ENCODE measurements at regions of chr7 and their contacts with region 1.

Region 1: GRCh38 chr7:116173051-116174028 is 37.0 kb upstream of the TES start:
- DNase-seq: peak; percentile 84
- H3K4me3 ChIP-seq: no peak overlapping the region
- H3K27ac ChIP-seq: no peak overlapping the region
- H3K4me1 ChIP-seq: no peaks in the 10 kb centered on the region
- H3K27me3 ChIP-seq: peaks cover 0 to 3% of the 10 kb centered on the region in 2 experiments
- CTCF ChIP-seq: peak in 1 of 2 donors; percentile 20
- POLR2A ChIP-seq: no peak

Region 2: DNA sequence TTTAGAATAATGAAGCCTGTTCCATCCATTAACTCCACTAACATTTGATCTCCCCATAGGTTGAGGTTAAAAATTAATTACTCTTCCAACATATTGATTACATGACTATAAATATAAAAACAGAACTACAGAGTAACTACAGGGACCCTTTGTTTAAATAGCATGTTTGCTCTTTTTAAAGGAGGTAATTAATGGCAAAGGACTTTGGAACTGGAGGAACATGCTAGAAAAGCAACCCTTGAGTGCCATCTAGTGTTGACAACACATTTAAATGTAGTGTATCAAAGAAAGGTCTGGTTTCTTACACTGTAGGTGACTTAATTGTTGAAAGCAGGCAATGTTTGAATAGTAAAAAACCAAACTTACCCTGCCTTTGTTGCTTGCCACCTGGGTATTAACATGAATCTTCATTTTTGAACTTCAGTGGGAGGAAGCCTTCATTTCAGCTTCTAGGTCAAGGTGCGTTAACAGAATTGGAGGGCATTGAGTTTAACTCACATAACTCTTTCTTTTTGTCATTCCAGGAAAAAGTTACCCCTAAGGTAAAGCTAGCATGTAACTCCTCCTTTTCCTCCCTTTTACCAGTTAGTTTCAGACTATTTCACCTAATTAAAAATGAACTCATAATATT is 636.4 kb after region 1 on chr7:
- CTCF ChIA-PET with region 1: interaction called, 3 read pairs
- POLR2A ChIA-PET with region 1: no interaction called
- dilution Hi-C with region 1: no loop called
- intact Hi-C with region 1: loop called (anchors 2 kb)
- DNase-seq: peak; percentile 86
- H3K4me3 ChIP-seq: no peak overlapping the region
- H3K27ac ChIP-seq: no peak overlapping the region
- H3K4me1 ChIP-seq: peaks cover 19% of the 10 kb centered on the region
- H3K27me3 ChIP-seq: no peaks in the 10 kb centered on the region
- CTCF ChIP-seq: peak; percentile 25 to 43
- POLR2A ChIP-seq: no peak